K562 (cell line): ENCODE measurements at regions of chr19 and their contacts with region 1.

Region 1: GRCh38 chr19:51338563-51339312 is 3.2 kb downstream of the VSIG10L start:
- DNase-seq: peak; percentile 87 to 94 (median 91)
- ATAC-seq: peak; percentile 86
- H3K4me3 ChIP-seq: peak overlapping the region; percentile 67
- H3K27ac ChIP-seq: peak overlapping the region; percentile 76
- H3K4me1 ChIP-seq: peaks cover 26 to 41% of the 10 kb centered on the region in 2 experiments; a peak in 4 of 5 replicates
- H3K27me3 ChIP-seq: no peaks in the 10 kb centered on the region
- CTCF ChIP-seq: peak; percentile 87 to 95 (median 87)
- EP300 ChIP-seq: no peak
- POLR2A ChIP-seq: no peak
- RAD21 ChIP-seq: peak; percentile 84 to 85

Region 2: GRCh38 chr19:51121257-51121656 is 217.5 kb before region 1 on chr19:
- CTCF ChIA-PET with region 1: no interaction called
- POLR2A ChIA-PET with region 1: no interaction called
- in situ Hi-C with region 1: no loop called
- intact Hi-C with region 1: no loop called
- DNase-seq: no peak
- ATAC-seq: no peak
- H3K4me3 ChIP-seq: no peak overlapping the region
- H3K27ac ChIP-seq: no peak overlapping the region
- H3K4me1 ChIP-seq: peaks cover 9 to 19% of the 10 kb centered on the region in 2 experiments; a peak in 4 of 5 replicates
- H3K27me3 ChIP-seq: peaks cover 13 to 47% of the 10 kb centered on the region in 2 experiments; a peak in 4 of 5 replicates
- CTCF ChIP-seq: no peak
- EP300 ChIP-seq: no peak
- POLR2A ChIP-seq: no peak
- RAD21 ChIP-seq: no peak

Region 3: GRCh38 chr19:51296336-51297093 is 42.2 kb before region 1 on chr19:
- CTCF ChIA-PET with region 1: no interaction called
- POLR2A ChIA-PET with region 1: interaction called, 3 read pairs
- in situ Hi-C with region 1: no loop called
- intact Hi-C with region 1: loop called (anchors 1 kb)
- DNase-seq: peak; percentile 25 to 51 (median 34)
- ATAC-seq: peak; percentile 79
- H3K4me3 ChIP-seq: no peak overlapping the region
- H3K27ac ChIP-seq: no peak overlapping the region
- H3K4me1 ChIP-seq: peaks cover 0 to 7% of the 10 kb centered on the region in 2 experiments; a peak in 2 of 5 replicates
- H3K27me3 ChIP-seq: peaks cover 27 to 80% of the 10 kb centered on the region in 2 experiments; a peak in 4 of 5 replicates
- CTCF ChIP-seq: peak; percentile 44 to 69 (median 50); a peak in 5 of 6 replicates
- EP300 ChIP-seq: no peak
- POLR2A ChIP-seq: no peak
- RAD21 ChIP-seq: peak; percentile 47 to 79

Region 4: DNA sequence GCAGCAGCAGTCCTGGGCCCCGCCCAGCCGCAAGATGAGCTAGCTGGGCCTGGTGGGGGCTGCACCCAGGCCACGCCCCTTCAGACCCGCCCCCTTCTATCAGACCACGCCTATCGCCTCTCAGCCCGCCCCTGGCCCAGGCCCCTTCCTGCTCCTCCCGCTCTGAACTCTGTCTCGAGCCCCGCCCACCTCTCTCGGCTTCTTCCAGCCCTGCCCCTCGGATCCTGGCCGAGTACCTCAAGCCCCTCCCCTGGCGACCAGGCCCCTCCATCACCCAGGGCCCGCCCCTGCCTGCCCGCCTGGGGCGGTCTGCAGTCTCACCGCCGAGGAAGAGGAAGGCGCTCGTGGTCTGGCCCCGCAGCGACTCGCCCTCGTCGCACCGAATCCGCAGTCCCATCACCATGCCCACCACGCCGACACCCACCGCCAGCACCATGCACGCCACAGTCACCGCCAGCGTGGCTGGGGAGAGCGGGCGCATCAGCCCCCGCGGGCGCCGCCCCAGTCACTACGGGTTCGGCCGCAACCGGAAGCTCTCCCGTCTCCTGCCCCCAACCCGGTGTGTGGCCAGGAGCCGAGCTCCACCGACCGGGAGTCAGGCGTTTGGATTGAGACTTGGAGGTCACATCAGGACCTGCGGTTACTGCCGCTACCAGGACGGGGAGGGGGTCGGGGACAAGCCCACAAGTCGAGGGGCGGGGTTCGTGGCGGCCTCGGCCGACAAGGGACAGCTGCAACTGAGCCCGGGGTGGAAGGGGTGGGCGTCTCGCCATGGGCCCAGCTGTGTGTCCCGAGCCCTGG is 29.0 kb after region 1 on chr19:
- CTCF ChIA-PET with region 1: no interaction called
- POLR2A ChIA-PET with region 1: interaction called, 11 read pairs
- in situ Hi-C with region 1: no loop called
- intact Hi-C with region 1: loop called (anchors 1 kb)
- DNase-seq: peak; percentile 96 to 99 (median 97)
- ATAC-seq: peak; percentile 89
- H3K4me3 ChIP-seq: peak overlapping the region; percentile 75
- H3K27ac ChIP-seq: peak overlapping the region; percentile 85
- H3K4me1 ChIP-seq: peaks cover 29 to 57% of the 10 kb centered on the region in 2 experiments
- H3K27me3 ChIP-seq: no peaks in the 10 kb centered on the region
- CTCF ChIP-seq: peak in 1 of 3 experiments; percentile 1; a peak in 1 of 6 replicates
- EP300 ChIP-seq: no peak
- POLR2A ChIP-seq: peak; percentile 85
- RAD21 ChIP-seq: peak in 1 of 2 experiments; percentile 5; a peak in 1 of 4 replicates

Region 5: GRCh38 chr19:51407511-51408131 is 68.9 kb after region 1 on chr19:
- CTCF ChIA-PET with region 1: interaction called, 10 read pairs
- POLR2A ChIA-PET with region 1: interaction called, 11 read pairs
- in situ Hi-C with region 1: no loop called
- intact Hi-C with region 1: loop called (anchors 1 kb)
- DNase-seq: peak; percentile 77 to 84 (median 79)
- ATAC-seq: peak; percentile 98
- H3K4me3 ChIP-seq: no peak overlapping the region
- H3K27ac ChIP-seq: no peak overlapping the region
- H3K4me1 ChIP-seq: peaks cover 7 to 13% of the 10 kb centered on the region in 2 experiments; a peak in 4 of 5 replicates
- H3K27me3 ChIP-seq: no peaks in the 10 kb centered on the region
- CTCF ChIP-seq: peak; percentile 88 to 91 (median 89)
- EP300 ChIP-seq: no peak
- POLR2A ChIP-seq: no peak
- RAD21 ChIP-seq: peak; percentile 65 to 91

Region 6: DNA sequence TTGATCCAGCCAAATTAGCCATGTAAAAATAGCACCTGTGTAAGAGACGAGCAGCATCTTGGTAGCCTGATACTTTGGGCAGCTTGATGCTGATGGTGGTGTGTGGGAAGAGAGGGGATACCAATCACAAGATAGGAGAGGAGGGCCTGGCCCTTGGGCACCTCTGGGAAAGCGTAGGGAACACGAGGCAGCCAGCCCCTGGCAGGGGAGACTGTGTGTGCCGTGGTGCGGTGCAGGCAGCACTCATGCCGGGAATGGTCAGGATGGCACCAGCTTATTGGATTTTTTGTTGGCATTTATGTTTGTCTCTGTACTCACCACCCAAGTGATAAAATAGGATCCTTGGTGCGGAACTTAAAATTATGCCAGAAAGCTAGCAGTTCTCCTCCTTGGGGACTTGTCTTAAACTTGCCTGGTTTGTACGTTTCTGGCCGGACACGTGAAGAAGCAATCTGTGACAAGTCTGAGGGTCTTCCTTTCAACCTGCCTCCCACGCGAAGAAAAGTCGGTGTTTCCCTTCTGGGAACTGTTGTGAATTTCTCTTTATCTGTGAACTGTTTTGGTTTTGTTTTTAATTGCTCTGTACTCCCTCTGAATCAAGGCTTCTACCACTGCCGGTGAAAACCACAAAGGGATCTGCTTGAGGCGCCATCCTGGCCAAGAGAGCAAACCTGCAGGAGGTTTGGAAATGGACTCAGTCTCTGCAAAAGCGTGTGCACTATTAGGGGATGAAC is 109.4 kb after region 1 on chr19:
- CTCF ChIA-PET with region 1: no interaction called
- POLR2A ChIA-PET with region 1: no interaction called
- in situ Hi-C with region 1: no loop called
- intact Hi-C with region 1: no loop called
- DNase-seq: no peak
- ATAC-seq: peak; percentile 47
- H3K4me3 ChIP-seq: no peak overlapping the region
- H3K27ac ChIP-seq: no peak overlapping the region
- H3K4me1 ChIP-seq: peaks cover 14 to 23% of the 10 kb centered on the region in 2 experiments
- H3K27me3 ChIP-seq: no peaks in the 10 kb centered on the region
- CTCF ChIP-seq: no peak
- EP300 ChIP-seq: no peak
- POLR2A ChIP-seq: no peak
- RAD21 ChIP-seq: no peak

Region 7: DNA sequence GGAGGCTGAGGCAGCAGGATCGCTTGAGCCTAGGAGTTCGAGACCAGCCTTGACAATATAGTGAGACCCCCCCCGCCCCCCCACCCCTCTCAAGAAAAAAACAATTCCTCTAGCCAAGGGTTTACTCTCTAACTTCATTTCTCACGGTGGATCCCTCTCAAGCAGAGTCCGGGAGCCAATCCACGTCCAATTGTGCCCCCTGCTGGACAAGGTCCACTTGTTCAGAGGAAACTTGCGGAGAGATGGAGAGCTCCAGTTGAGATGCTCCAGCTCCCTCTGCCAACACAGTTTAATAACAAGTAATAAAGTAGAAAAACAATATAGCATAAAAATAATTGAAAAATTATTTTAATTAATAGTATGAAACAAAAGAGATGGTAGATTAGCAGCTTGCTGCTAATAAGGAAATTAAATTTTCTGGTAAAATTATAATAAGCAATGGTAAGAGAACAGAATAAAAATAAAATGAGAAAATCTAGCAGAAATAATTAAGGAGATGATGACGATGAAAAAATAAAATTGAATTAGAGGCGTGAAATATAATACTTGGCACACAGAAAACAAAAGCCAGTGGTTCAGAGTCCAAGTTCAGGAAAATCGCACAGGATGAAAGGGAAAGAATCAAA is 322.4 kb after region 1 on chr19:
- CTCF ChIA-PET with region 1: interaction called, 14 read pairs
- POLR2A ChIA-PET with region 1: interaction called, 3 read pairs
- in situ Hi-C with region 1: loop called (anchors 5 kb)
- intact Hi-C with region 1: loop called (anchors 2 kb)
- DNase-seq: peak; percentile 77 to 91 (median 80)
- ATAC-seq: peak; percentile 94
- H3K4me3 ChIP-seq: no peak overlapping the region
- H3K27ac ChIP-seq: no peak overlapping the region
- H3K4me1 ChIP-seq: peaks cover 0 to 2% of the 10 kb centered on the region in 2 experiments; a peak in 2 of 5 replicates
- H3K27me3 ChIP-seq: no peaks in the 10 kb centered on the region
- CTCF ChIP-seq: peak; percentile 74 to 89 (median 88)
- EP300 ChIP-seq: no peak
- POLR2A ChIP-seq: no peak
- RAD21 ChIP-seq: peak; percentile 75 to 89